AG04449 (cell line): ENCODE measurements at regions of chr15 and their contacts with region 1.

Region 1: GRCh38 chr15:51971375-51972133 is at the start of gene LEO1:
- DNase-seq: peak; percentile 93
- H3K4me3 ChIP-seq: peak within 1 kb of the TSS; percentile 91
- CTCF ChIP-seq: peak; percentile 55

Region 2: GRCh38 chr15:51536965-51537574 is 434.5 kb before region 1 on chr15:
- CTCF ChIA-PET with region 1: no interaction called
- POLR2A ChIA-PET with region 1: no interaction called
- DNase-seq: peak; percentile 4
- H3K4me3 ChIP-seq: no peak overlapping the region
- CTCF ChIP-seq: peak; percentile 39

Region 3: GRCh38 chr15:51982013-51982769 is 10.6 kb after region 1 on chr15:
- CTCF ChIA-PET with region 1: interaction called, 18 read pairs
- POLR2A ChIA-PET with region 1: interaction called, 4 read pairs
- DNase-seq: no peak
- H3K4me3 ChIP-seq: peak overlapping the region; percentile 18
- CTCF ChIP-seq: peak; percentile 39